Activated CD4-positive, alpha-beta memory T cell treated with anti-CD3 and anti-CD28 coated beads, Interleukin-2, amount 10 ng/mL, durations not matched to agents 7 days and 5 days (primary cell): ENCODE measurements at regions of chr1 and their contacts with region 1.

Region 1: DNA sequence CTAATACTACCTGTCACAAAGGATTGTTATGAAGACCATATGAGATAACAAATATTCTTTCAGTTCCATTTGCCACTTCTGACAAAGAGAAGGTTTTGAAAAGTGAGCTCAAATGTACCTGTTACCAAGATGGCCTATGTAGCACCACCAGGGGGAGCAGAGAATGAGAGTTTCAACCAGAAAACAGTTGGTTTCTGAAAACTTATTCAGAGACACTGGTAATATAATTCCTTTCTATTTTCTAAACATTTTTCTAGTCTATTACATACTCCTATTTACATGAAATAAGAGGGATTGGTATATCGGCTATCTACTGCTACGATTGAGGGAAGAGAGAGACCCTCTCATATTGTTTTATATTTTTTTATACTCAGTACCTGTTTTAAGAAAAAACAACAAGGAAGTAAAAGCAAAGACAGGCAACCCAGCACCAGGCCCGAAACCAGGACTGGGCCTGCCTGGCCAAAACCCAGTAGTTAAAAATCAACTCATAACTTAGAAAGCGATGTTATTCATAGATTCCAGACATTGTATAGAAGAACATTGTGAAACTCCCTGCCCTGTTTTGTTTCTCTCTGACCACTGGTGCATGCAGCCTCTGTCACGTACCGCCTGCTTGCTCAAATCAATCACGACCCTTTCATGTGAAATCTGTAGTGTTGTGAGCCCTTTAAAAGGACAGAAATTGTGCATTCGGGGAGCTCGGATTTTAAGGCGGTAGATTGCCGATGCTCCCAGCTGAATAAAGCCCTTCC is 48.3 kb downstream of the IL23R start:
- DNase-seq: peak; percentile 63
- H3K4me3 Mint-ChIP-seq: no peak overlapping the region
- H3K27ac Mint-ChIP-seq: no peak overlapping the region
- H3K4me1 Mint-ChIP-seq: peaks cover 23% of the 10 kb centered on the region
- H3K27me3 Mint-ChIP-seq: no peaks in the 10 kb centered on the region

Region 2: DNA sequence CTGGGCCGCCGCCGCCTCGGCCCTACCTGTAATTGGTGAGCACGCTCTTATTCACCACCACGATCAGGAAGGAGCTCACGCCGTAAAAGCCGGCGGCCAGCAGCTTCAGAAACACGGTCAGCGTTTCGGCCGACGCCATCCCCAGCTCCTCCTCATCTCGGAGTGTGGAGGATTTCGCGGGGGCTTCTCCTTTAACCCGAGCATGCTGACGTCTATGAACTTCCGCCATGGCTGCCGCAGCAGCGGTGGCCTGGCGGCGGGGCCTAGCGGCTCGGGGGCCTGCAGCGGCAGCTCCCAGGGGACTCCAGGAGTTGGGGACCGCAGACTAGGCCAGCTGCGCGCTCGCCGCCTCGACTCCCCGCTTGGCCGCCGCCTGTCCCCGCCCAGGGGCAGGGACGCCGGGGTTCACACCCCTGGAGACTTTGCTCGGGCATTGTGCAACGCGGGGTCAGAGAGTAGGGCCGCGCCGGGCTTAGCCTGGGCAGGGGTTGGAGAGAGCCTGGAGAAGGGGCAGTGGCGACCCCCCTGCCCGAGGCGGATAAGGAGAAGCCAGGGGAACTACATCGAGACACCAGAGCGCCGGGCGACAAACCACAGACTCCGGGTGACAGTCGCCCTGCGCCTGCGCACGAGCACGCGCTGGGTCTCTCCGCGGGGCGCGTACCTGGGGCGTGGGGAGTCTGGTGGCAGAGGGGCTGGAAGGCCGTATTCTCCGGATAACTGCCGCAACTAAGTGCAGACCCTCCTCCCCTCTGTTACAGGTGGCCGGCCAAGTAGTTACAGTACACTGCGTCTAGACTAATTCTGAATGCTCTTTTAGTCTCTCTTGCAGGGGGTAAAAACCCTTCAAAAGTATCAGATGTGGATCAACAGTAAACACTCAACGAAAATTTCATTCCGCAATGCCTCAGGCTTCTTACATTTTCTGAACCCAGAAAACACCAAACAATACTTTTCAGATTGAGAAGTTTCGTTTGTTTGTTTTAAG is 160.5 kb before region 1 on chr1 and contains the start of gene SLC35D1:
- CTCF ChIA-PET with region 1: interaction called, 45 read pairs
- POLR2A ChIA-PET with region 1: interaction called, 12 read pairs
- DNase-seq: peak; percentile 81
- H3K4me3 Mint-ChIP-seq: peak within 1 kb of the TSS; percentile 81
- H3K27ac Mint-ChIP-seq: peak within 1 kb of the TSS; percentile 84
- H3K4me1 Mint-ChIP-seq: peaks cover 31% of the 10 kb centered on the region
- H3K27me3 Mint-ChIP-seq: peaks cover 2% of the 10 kb centered on the region
- total RNA-seq, gene SLC35D1: 14.2 to 15.7 TPM

Region 3: GRCh38 chr1:67085326-67085725 is 129.3 kb before region 1 on chr1:
- CTCF ChIA-PET with region 1: no interaction called
- POLR2A ChIA-PET with region 1: no interaction called
- DNase-seq: no peak
- H3K4me3 Mint-ChIP-seq: no peak overlapping the region
- H3K27ac Mint-ChIP-seq: no peak overlapping the region
- H3K4me1 Mint-ChIP-seq: peaks cover 1% of the 10 kb centered on the region
- H3K27me3 Mint-ChIP-seq: no peaks in the 10 kb centered on the region

Region 4: DNA sequence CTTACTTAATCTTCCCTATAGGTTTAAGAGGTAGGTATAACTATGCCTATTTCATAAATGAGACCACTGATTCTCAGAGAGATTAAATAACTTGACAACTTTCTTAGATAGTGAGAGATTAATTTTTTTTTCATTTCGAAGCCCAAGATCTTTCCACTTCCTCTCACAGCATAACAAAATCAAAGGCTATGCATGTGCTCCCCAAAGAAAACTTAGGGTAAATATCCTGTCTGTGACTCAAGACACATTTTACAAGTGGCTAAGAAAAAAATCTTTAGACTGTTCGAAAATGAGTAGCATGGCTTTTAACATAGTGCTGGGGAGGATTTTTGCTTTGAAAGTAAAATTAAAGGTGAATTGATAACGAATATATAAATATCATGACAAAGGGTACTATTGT is 71.7 kb before region 1 on chr1:
- CTCF ChIA-PET with region 1: interaction called, 164 read pairs
- POLR2A ChIA-PET with region 1: interaction called, 5 read pairs
- DNase-seq: no peak
- H3K4me3 Mint-ChIP-seq: no peak overlapping the region
- H3K27ac Mint-ChIP-seq: no peak overlapping the region
- H3K4me1 Mint-ChIP-seq: peaks cover 29% of the 10 kb centered on the region
- H3K27me3 Mint-ChIP-seq: peaks cover 6% of the 10 kb centered on the region

Region 5: DNA sequence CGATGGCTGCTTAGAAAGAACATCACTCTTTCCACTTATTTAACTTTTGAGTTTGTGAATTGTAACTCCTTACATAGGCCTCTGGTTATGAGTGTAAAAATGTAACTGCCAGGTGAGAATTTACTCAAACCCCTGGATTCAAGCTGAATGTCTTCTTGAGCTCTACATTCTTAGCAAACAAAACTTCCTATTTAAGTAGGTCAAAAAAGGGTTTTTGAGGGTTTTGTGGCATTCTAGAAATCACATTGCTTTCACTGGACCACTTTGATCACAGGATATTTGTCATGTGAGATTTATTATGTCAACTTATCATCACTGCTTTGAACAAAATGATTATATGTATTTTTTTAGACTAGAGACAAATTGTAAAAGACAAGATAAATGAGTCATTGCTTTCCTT is 42.6 kb before region 1 on chr1:
- CTCF ChIA-PET with region 1: interaction called, 28 read pairs
- POLR2A ChIA-PET with region 1: interaction called, 12 read pairs
- DNase-seq: no peak
- H3K4me3 Mint-ChIP-seq: peak overlapping the region; percentile 55
- H3K27ac Mint-ChIP-seq: peak overlapping the region; percentile 82
- H3K4me1 Mint-ChIP-seq: peaks cover 68% of the 10 kb centered on the region
- H3K27me3 Mint-ChIP-seq: peaks cover 1% of the 10 kb centered on the region

Region 6: GRCh38 chr1:67224856-67225255 is 10.3 kb after region 1 on chr1:
- CTCF ChIA-PET with region 1: interaction called, 13 read pairs
- POLR2A ChIA-PET with region 1: no interaction called
- DNase-seq: no peak
- H3K4me3 Mint-ChIP-seq: no peak overlapping the region
- H3K27ac Mint-ChIP-seq: no peak overlapping the region
- H3K4me1 Mint-ChIP-seq: peaks cover 7% of the 10 kb centered on the region
- H3K27me3 Mint-ChIP-seq: no peaks in the 10 kb centered on the region